ENCODE measurements at regions of chr3 and their contacts with region 1.

Region 1: GRCh38 chr3:50121416-50122032 is 32.8 kb downstream of the RBM5 start:
- DNase-seq: peak; percentile 89
- H3K4me3 ChIP-seq: no peak overlapping the region
- H3K27ac ChIP-seq: no peak overlapping the region
- H3K4me1 ChIP-seq: peaks cover 13 to 50% of the 10 kb centered on the region in 2 experiments
- H3K27me3 ChIP-seq: no peaks in the 10 kb centered on the region
- CTCF ChIP-seq: peak; percentile 83
- EP300 ChIP-seq: no peak
- RAD21 ChIP-seq: peak; percentile 97

Region 2: GRCh38 chr3:50078622-50079021 is 42.9 kb before region 1 on chr3:
- CTCF ChIA-PET with region 1: no interaction called
- POLR2A ChIA-PET with region 1: no interaction called
- DNase-seq: no peak
- H3K4me3 ChIP-seq: no peak overlapping the region
- H3K27ac ChIP-seq: no peak overlapping the region
- H3K4me1 ChIP-seq: no peaks in the 10 kb centered on the region
- H3K27me3 ChIP-seq: no peaks in the 10 kb centered on the region
- CTCF ChIP-seq: no peak
- EP300 ChIP-seq: no peak
- RAD21 ChIP-seq: no peak

Region 3: DNA sequence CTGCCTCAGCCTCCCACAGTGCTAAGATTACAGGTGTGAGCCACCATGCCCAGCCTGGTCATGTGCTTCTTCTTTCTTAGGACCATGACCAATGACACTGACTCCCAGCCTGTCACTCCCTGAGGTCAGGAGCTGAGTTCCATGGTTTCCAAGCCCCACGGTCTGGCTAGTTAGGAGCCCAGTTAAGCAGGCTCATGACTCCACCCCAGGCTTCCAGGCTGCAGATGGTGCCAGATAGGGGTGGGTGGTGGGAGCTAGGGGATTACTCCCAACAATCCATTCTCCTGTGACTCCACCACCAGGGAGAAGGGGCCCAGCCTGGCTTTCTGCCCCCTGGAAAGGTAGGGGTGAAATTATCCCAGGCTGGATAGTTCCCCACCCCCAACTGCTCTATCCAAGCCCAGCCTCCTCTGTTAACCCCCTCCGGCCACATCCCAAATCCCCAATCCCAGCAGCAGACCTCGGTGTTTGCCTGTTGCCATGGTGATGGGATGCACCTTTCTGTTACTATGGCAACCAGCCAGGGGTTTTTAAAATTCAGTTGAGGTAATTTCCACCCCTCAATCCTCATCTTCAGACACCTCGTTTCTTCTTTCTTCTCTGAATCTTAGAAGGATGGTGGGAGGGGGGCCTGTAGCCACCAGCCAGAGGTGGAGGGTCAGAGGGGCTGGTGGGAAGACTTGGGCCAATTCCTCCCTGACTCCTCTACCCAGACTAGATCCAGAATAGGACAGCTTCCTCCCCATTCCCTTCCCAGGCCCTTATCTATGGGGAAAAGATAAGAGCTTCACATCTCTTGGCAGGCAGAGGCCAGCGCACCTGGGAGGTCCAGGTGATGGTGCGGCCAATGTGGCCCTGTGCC is 11.1 kb after region 1 on chr3:
- CTCF ChIA-PET with region 1: interaction called, 22 read pairs
- POLR2A ChIA-PET with region 1: interaction called, 19 read pairs
- DNase-seq: peak; percentile 56
- H3K4me3 ChIP-seq: no peak overlapping the region
- H3K27ac ChIP-seq: no peak overlapping the region
- H3K4me1 ChIP-seq: peaks cover 0 to 19% of the 10 kb centered on the region in 2 experiments; a peak in 1 of 4 replicates
- H3K27me3 ChIP-seq: no peaks in the 10 kb centered on the region
- CTCF ChIP-seq: no peak
- EP300 ChIP-seq: no peak
- RAD21 ChIP-seq: no peak

Region 4: GRCh38 chr3:50147861-50148260 is 26.3 kb after region 1 on chr3:
- CTCF ChIA-PET with region 1: interaction called, 132 read pairs
- POLR2A ChIA-PET with region 1: interaction called, 12 read pairs
- DNase-seq: peak; percentile 90
- H3K4me3 ChIP-seq: no peak overlapping the region
- H3K27ac ChIP-seq: peak overlapping the region in 1 of 2 experiments; percentile 91; a peak in 2 of 4 replicates
- H3K4me1 ChIP-seq: peaks cover 0 to 53% of the 10 kb centered on the region in 2 experiments; a peak in 2 of 4 replicates
- H3K27me3 ChIP-seq: no peaks in the 10 kb centered on the region
- CTCF ChIP-seq: no peak
- EP300 ChIP-seq: no peak
- RAD21 ChIP-seq: no peak

Region 5: GRCh38 chr3:50170689-50171088 is 49.2 kb after region 1 on chr3:
- CTCF ChIA-PET with region 1: interaction called, 684 read pairs
- POLR2A ChIA-PET with region 1: no interaction called
- DNase-seq: no peak
- H3K4me3 ChIP-seq: no peak overlapping the region
- H3K27ac ChIP-seq: peak overlapping the region in 1 of 2 experiments; percentile 54; a peak in 2 of 4 replicates
- H3K4me1 ChIP-seq: peaks cover 12 to 19% of the 10 kb centered on the region in 2 experiments; a peak in 3 of 4 replicates
- H3K27me3 ChIP-seq: no peaks in the 10 kb centered on the region
- CTCF ChIP-seq: no peak
- EP300 ChIP-seq: no peak
- RAD21 ChIP-seq: no peak

Region 6: GRCh38 chr3:50192689-50193141 is 71.2 kb after region 1 on chr3:
- CTCF ChIA-PET with region 1: interaction called, 684 read pairs
- POLR2A ChIA-PET with region 1: interaction called, 21 read pairs
- DNase-seq: peak; percentile 88
- H3K4me3 ChIP-seq: peak overlapping the region in 1 of 2 experiments; percentile 21; a peak in 1 of 4 replicates
- H3K27ac ChIP-seq: no peak overlapping the region
- H3K4me1 ChIP-seq: peaks cover 0 to 19% of the 10 kb centered on the region in 2 experiments; a peak in 1 of 4 replicates
- H3K27me3 ChIP-seq: peaks cover 33% of the 10 kb centered on the region
- CTCF ChIP-seq: peak; percentile 90
- EP300 ChIP-seq: no peak
- RAD21 ChIP-seq: peak; percentile 89

Region 7: GRCh38 chr3:50211930-50212329 is 90.4 kb after region 1 on chr3:
- CTCF ChIA-PET with region 1: interaction called, 12 read pairs
- POLR2A ChIA-PET with region 1: no interaction called
- DNase-seq: no peak
- H3K4me3 ChIP-seq: no peak overlapping the region
- H3K27ac ChIP-seq: no peak overlapping the region
- H3K4me1 ChIP-seq: peaks cover 0 to 4% of the 10 kb centered on the region in 2 experiments; a peak in 1 of 4 replicates
- H3K27me3 ChIP-seq: no peaks in the 10 kb centered on the region
- CTCF ChIP-seq: no peak
- EP300 ChIP-seq: no peak
- RAD21 ChIP-seq: no peak

Region 8: GRCh38 chr3:50235716-50236496 is 114.4 kb after region 1 on chr3 and contains the start of gene GNAI2:
- CTCF ChIA-PET with region 1: no interaction called
- POLR2A ChIA-PET with region 1: no interaction called
- DNase-seq: peak; percentile 98
- H3K4me3 ChIP-seq: peak within 1 kb of the TSS; percentile 82 to 98
- H3K27ac ChIP-seq: peak within 1 kb of the TSS; percentile 60 to 90
- H3K4me1 ChIP-seq: peaks cover 8 to 18% of the 10 kb centered on the region in 2 experiments; a peak in 2 of 4 replicates
- H3K27me3 ChIP-seq: no peaks in the 10 kb centered on the region
- CTCF ChIP-seq: no peak
- EP300 ChIP-seq: peak in 1 of 2 experiments; percentile 49; a peak in 2 of 4 replicates
- RAD21 ChIP-seq: no peak
- polyA plus RNA-seq, gene GNAI2: 641 and 649 TPM in 2 replicates

Measured in SK-N-SH (cell line).